Right ventricle myocardium inferior (tissue), 1 donor: ENCODE measurements at regions of chr16 and their contacts with region 1.

Region 1: DNA sequence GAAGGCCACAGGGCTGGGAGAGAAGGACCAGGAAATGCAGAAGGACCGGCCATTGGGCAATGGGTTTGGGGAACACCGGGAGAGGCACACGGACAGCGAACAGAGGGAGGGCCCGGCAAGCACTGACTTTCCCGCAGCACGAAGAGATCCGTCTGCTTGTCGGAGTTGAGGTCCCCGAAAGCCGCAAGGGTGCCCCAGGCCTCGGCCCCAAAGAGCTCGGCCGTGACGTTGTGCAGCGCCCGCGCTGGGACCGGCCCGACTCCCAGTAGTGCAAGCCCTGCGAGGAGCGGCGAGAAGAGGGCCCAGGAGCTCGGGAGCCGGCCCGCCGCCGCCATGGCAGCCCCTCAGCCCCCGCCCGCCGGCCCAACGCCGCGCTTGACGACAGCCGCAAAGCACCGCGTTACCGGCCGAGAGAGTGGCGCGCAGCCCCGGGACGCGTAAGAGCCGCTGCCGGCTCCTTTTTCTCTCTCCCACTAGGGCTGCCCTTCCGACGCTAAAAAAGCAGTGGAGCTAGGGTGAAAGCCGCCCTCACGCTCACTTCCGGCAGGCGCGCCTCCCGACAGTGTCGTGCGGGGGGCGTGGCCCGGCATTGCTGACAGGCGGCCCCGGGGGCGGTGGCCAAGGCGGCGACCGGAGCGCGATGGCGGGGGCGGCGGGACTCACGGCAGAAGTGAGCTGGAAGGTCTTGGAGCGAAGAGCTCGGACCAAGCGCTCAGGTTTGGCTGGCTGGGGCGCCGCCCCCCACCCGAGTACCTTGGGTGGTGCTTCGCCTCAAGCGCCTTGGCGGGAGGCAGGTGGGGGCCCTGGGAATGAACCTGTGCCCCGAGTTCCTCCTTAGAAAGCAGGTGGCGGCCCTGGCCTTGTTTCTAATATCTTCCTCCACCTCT is at the starts of genes ITFG1 and PHKB:
- DNase-seq: peak; percentile 98
- ATAC-seq: peak; percentile 96
- total RNA-seq, gene ITFG1: 58.4 TPM
- total RNA-seq, gene PHKB: 72.8 TPM

Region 2: DNA sequence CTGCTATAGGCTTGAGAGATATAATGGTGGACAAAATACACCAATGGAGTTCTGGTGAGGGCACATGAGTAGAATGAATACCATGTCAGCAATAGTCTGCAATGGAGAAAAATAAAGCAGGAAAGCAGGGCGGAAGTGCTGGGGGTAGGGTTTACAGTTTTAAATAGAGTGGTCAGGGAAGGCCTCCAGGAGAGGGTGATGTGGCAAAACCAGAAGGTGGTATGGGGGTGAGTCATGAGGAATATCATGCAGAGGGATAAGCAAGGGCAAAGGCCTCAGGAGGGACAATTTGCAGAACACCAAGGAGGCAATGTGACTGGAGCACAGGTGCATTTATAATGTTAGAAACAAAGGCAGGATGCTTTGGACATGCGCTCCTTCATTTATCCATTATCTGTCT is 102.1 kb before region 1 on chr16:
- intact Hi-C with region 1: no loop called
- DNase-seq: no peak
- ATAC-seq: no peak

Region 3: DNA sequence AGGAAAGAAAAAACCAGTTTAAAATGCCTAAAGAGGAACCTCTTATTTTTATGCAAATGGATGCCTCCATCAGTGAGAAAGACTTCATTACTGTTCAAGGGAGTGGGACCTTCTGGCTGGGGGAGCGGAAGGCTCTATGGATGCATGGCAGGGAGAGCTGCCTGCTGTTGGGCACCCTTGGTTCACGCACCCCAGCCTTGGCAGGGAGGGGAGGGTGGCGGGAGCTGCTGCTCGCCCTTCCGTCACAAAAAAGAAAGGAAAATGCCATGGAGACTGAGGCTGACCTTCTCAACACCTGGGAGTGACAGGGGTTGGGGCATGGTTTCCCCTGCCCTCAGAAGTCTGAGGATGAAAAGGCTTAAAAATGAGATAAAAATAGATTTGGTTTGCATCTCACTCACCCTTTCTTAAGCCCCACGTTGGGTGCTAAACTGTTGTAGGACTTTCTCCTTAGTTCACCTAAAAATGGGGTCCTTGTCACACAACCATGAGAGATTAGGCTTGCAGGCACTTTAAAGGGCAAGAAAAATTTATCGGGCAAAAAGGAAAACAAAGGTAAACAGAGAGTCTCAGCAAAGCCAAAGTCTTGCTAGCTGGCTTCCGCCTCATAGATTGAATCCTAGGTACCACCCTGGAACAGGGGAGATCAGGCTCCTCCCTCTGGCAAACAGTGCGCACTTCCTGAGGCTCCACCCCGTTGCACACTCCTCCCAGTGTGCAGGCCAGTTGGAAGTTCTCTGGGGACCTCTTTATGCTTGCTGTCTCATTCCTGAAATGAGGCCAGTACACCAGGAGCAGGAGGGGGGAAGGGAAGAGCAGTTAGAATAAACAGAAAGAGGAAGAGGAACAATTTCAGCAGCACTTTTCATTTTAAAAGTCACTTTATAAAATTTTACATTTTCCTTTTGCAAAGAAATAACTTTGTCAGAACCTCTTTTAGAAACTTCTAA is 31.7 kb after region 1 on chr16:
- intact Hi-C with region 1: loop called (anchors 2 kb)
- DNase-seq: peak; percentile 87
- ATAC-seq: peak; percentile 99

Region 4: GRCh38 chr16:47523342-47524006 is 62.5 kb after region 1 on chr16:
- intact Hi-C with region 1: loop called (anchors 1 kb)
- DNase-seq: no peak
- ATAC-seq: no peak

Region 5: DNA sequence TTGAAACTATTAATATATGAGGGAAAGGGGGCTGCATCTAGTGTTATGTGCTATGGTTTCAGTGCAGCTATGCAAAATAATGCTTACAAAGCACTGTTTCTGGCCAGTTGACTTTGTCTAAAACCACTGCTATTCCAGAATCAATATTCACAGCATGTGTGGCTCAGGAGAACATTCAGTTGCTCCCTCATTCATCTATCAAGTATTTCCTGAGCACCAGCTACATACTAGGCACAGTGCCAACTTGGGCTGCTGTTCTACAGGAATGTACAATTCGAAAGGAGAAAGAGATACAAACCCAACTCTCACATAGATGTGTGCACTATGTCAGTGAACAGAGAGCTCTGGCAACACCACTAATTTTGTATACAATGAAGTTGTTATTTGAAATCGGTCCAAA is 183.2 kb after region 1 on chr16:
- intact Hi-C with region 1: loop called (anchors 10 kb)
- DNase-seq: no peak
- ATAC-seq: peak; percentile 62

Region 6: GRCh38 chr16:47979164-47979520 is 518.2 kb after region 1 on chr16:
- intact Hi-C with region 1: no loop called
- DNase-seq: no peak
- ATAC-seq: no peak